ENCODE measurements at regions of chr2 and their contacts with region 1.

Region 1: DNA sequence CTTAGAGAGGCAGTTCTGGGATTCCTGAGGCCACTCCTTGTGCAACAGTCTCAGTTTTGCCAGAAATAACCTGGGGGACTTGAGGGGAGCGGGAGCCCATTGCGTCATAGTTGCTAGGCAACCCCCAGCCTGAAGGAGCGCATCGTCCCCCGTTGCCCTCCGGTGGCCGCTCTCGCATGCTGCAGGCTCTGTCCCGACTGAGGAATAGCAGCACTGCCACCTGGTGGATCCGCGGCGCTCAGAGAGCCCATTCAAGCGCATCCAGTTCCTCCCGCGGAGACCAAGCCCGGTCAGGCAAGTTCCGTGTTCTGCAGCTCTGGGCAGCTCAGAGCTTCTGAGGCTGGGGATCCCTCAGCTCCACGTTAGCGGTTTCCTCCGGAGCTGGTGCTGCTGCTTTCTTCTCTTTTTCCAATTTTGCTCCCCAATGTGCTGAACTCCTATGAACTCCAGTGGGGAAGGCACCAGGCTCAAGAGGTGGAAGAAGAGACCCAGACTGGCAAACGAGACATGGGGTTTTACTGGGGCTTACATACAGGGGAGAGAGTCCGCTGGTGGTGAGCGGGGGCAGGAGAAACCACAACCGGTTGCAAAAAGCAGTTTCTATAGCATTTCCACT is 15.1 kb downstream of the SLC4A3 start:
- DNase-seq: peak; percentile 92 to 98 (median 95)
- ATAC-seq: peak; percentile 97 to 100 (median 99)
- H3K4me3 ChIP-seq: no peak overlapping the region
- H3K27ac ChIP-seq: no peak overlapping the region
- H3K4me1 ChIP-seq: peaks cover 0 to 2% (median 0%) of the 10 kb centered on the region in 3 donors
- H3K27me3 ChIP-seq: no peaks in the 10 kb centered on the region
- CTCF ChIP-seq: peak; percentile 97 to 99 (median 98)

Region 2: DNA sequence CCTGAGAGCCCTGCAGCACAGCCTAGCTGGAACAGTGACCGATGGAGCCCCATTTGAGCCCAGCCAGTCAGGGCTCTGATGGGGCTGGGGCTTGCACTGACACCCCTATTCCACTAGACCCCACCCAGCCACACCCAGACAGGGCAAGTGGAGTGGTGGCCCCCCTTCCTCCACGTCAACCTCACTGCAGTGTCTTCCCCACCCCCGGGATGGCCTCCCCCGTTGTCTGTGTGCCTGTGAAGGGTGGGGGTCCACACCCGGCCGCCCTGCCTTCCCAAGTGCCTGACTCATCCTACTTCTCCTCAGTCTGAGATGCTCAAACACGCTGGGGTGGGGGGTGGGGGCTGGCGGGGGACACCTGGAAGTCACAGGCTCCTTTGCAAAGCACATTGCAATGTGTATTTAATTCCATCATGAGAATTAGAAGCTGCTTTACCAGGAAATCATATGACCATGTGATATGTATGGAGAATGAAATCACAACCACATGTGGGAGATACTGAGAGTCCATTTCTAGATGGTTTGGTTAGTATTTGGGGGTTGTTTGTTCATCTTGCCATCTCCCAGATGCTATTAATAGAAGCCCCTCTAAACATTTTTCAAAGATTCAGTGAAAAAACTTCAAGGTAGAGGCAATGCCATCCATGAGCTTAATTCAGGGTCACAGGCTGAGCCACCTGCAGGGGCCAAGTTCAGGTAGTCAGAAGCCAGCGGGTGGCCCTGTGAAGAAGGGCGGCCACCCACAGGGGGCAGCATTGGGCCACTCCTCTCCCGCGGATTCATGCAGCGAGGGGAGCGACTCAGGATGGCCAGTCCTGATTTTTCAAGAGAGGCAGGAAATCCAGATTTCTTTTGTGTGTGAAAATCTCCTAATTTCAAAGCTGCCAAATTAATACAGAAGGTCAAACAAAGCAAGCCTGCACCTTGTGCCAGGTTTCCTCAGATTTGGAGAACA is 166.6 kb before region 1 on chr2:
- intact Hi-C with region 1: loop called in 1 of 3 experiments (anchors 5 kb)
- DNase-seq: peak; percentile 55 to 94 (median 82)
- ATAC-seq: peak; percentile 78 to 99 (median 95)
- H3K4me3 ChIP-seq: no peak overlapping the region
- H3K27ac ChIP-seq: no peak overlapping the region
- H3K4me1 ChIP-seq: no peaks in the 10 kb centered on the region
- H3K27me3 ChIP-seq: no peaks in the 10 kb centered on the region
- CTCF ChIP-seq: peak; percentile 87 to 90 (median 88)

Region 3: GRCh38 chr2:219543601-219544358 is 98.8 kb before region 1 on chr2 and contains the starts of genes CHPF and TMEM198:
- intact Hi-C with region 1: loop called (anchors 2 to 10 kb)
- DNase-seq: peak; percentile 96 to 100 (median 99)
- ATAC-seq: peak; percentile 88 to 93 (median 90)
- H3K4me3 ChIP-seq: peak within 1 kb of the TSS; percentile 75 to 92 (median 84)
- H3K27ac ChIP-seq: peak within 1 kb of the TSS; percentile 93 to 98 (median 96)
- H3K4me1 ChIP-seq: peaks cover 0 to 9% (median 5%) of the 10 kb centered on the region in 3 donors
- H3K27me3 ChIP-seq: no peaks in the 10 kb centered on the region
- CTCF ChIP-seq: no peak
- total RNA-seq, gene CHPF: 55.1 to 105 (median 68.5) TPM
- total RNA-seq, gene TMEM198: 2.6 to 7.1 (median 5.1) TPM

Measured in pancreas (tissue), 10 donors.